ENCODE measurements at regions of chr17 and their contacts with region 1.

Region 1: DNA sequence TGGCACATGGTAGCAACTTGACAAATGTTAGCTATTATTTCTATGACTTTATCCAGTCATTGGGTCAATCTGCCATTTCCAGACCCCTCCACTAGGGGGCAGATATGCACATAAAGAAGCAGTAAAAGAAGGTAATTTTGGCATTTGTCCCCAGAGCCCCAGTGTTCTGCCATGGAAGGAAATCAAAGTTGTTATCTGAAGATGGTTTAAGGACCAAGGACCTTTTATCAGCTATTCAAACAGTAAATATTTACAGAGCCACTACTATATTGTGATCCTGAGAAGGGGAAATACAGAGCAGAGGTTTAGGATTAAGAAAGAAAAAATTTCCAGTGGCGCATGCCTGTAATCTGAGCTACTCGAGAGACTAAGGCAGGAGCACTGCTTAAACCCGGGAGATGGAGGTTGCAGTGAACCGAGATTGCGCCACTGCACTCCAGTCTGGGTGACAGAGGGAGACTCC is 20.0 kb downstream of the TRAF4 start:
- DNase-seq: peak; percentile 51
- H3K4me3 ChIP-seq: no peak overlapping the region
- H3K27ac ChIP-seq: no peak overlapping the region
- H3K27me3 ChIP-seq: no peaks in the 10 kb centered on the region
- CTCF ChIP-seq: peak; percentile 89

Region 2: DNA sequence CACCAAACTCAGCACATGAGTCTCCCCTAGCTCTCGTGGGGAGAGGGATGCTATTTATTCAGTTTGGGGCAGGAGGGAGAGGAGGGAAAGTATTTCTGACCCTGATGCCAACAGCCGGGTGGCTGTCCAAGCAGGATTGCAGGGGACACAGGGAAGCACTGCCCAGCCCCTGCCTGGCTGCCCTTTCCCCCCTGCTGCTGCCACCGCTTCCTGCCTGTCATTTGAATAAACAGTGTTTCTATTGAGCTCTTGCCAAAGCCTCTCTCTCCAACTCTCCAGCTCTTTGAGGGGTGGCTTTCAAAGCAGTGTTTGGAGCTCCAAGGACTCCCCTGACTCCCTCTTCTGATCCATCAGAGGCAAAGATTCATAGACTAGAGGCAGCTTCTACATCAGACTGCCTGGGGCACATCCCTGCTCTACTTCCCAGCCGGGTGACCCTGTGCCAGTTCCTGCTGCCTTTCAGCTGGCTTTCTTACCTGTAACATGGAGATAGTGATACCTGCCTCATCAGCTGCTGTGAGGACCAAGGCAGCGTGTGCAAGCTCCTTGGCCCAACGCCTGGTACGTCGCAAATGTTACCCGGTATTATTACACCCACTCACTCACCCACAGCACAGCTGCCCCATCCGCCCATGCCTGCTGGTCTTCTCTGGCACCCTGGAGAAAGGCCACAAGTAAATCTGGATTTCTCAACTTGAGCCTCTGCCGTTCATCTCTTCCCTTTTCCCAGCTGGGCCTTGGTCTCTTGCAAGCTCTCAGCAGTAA is 61.7 kb before region 1 on chr17:
- CTCF ChIA-PET with region 1: no interaction called
- POLR2A ChIA-PET with region 1: no interaction called
- DNase-seq: no peak
- H3K4me3 ChIP-seq: no peak overlapping the region
- H3K27ac ChIP-seq: no peak overlapping the region
- H3K27me3 ChIP-seq: no peaks in the 10 kb centered on the region
- CTCF ChIP-seq: no peak

Region 3: DNA sequence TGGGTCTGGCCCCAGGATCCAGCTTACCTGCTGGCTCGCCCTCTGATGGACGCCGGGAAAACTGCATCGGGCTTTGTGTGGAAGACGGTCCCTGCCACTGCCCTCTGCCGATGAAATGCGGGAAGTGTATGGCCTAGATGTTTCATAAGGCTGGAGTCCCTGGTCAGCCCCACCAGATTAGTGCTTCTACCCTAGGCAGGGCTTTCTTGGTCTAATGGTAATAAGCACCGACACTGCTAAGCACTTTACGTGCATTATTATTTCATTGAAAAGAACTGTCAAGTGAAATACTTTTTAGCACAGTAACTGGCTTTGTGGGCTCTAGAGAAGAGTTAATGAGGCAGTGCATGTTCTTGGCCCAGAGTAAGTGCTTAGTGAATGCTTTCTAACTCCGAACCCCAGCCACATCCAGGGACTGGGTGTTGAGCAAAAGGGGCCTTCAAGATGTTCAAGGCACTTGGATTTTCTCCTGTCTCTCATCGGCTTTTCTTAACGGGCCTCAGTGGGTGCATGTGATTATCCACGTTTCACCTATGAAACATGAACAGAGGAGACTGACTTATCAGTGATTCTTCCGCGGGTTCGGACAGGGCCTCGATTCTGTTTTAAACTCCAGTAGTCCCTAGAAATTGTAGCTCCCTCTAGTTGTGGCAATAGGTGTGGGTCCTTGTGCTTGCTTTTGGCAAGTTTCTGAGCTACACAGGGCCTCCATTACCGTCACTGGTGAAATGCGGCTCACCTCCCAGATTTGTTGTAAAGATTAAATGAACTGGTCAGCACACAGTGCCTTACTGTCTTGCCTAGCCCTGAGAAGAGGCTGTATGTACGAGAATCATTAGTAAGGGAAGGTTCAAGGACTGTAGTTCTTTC is 13.4 kb before region 1 on chr17:
- CTCF ChIA-PET with region 1: interaction called, 100 read pairs
- POLR2A ChIA-PET with region 1: no interaction called
- DNase-seq: peak; percentile 88
- H3K4me3 ChIP-seq: no peak overlapping the region
- H3K27ac ChIP-seq: peak overlapping the region; percentile 11
- H3K27me3 ChIP-seq: no peaks in the 10 kb centered on the region
- CTCF ChIP-seq: peak; percentile 100

Region 4: GRCh38 chr17:28807925-28808634 is 44.2 kb after region 1 on chr17:
- CTCF ChIA-PET with region 1: interaction called, 10 read pairs
- POLR2A ChIA-PET with region 1: interaction called, 3 read pairs
- DNase-seq: peak; percentile 66
- H3K4me3 ChIP-seq: no peak overlapping the region; the same call in 1 of the 2 replicates
- H3K27ac ChIP-seq: peak overlapping the region; percentile 73
- H3K27me3 ChIP-seq: no peaks in the 10 kb centered on the region
- CTCF ChIP-seq: no peak

Region 5: DNA sequence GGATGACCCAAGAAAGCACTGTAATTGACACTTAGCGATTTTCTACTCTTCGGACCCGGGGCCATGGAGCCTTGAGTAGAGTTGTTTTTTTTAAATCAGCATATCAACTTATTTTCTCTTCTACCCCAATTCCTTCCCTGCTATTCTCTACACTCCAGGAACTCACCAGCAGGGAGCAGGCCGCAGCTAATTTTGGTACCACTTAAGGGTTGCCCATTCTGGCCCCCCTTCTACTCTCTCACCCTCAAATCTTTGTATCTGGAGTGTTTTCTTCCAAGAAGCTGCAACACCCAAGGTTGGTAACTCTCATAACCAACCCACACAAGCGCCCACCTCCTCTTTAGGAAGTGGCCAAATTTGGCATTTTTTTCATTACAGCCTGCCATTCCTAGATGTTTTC is 85.4 kb after region 1 on chr17:
- CTCF ChIA-PET with region 1: interaction called, 11 read pairs
- POLR2A ChIA-PET with region 1: no interaction called
- DNase-seq: no peak
- H3K4me3 ChIP-seq: no peak overlapping the region
- H3K27ac ChIP-seq: no peak overlapping the region
- H3K27me3 ChIP-seq: no peaks in the 10 kb centered on the region
- CTCF ChIP-seq: 0 out of 2 replicates have a peak, but pooled peaks have one; percentile 7

Region 6: GRCh38 chr17:28902819-28903545 is 139.1 kb after region 1 on chr17 and contains the start of gene DHRS13:
- CTCF ChIA-PET with region 1: interaction called, 46 read pairs
- POLR2A ChIA-PET with region 1: no interaction called
- DNase-seq: peak; percentile 57
- H3K4me3 ChIP-seq: peak within 1 kb of the TSS; percentile 66
- H3K27ac ChIP-seq: peak within 1 kb of the TSS; percentile 39
- H3K27me3 ChIP-seq: no peaks in the 10 kb centered on the region
- CTCF ChIP-seq: peak; percentile 72
- polyA plus RNA-seq, gene DHRS13: 2.9 and 3.1 TPM in 2 replicates

Region 7: DNA sequence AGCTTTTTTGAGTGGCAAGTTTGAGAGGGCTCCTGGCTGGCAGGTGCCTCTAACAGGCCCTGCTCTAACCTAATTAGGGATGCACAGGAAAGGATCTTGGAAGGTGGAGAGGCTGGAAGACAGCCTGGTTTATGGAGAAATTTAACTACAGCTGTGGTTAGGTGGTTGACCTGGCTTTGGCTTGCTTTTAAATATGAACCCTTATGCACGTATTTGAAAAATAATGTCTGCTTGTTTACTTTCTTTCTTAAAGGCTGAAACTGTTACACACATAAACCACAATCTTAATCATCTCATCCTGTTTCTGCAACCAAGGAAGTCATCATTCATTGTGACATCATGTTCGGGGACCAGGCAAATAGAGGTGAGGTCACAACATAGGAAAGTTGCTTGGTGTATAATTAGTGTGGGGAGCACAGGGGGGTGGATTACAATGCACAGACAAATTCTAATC is 162.1 kb after region 1 on chr17:
- CTCF ChIA-PET with region 1: interaction called, 13 read pairs
- POLR2A ChIA-PET with region 1: no interaction called
- DNase-seq: no peak
- H3K4me3 ChIP-seq: no peak overlapping the region
- H3K27ac ChIP-seq: no peak overlapping the region
- H3K27me3 ChIP-seq: no peaks in the 10 kb centered on the region
- CTCF ChIP-seq: no peak